ENCODE measurements at regions of chr2 and their contacts with region 1.

Region 1: GRCh38 chr2:17851731-17852585 is 26.5 kb upstream of the KCNS3 start:
- DNase-seq: peak; percentile 27 to 87 (median 68)

Region 2: DNA sequence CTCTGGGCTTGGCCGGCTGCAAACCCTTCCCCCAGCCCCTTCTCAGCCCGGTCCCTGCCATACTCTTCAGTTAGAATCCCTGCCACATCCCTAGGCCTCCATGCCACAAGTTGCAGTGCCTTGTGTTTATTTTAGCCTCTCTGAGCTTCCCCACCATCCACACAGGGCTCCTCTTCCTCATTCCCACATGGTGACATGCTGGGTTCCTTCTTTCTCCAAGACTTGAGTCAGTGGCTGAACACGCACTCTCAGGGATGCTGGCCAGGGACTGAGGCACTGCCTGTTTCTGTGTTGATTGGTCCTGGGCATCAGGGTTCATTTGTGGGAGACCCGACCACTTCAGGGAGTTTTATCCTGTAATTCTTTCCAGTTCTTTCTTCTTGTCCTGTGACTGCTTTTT is 82.8 kb after region 1 on chr2:
- intact Hi-C with region 1: no loop called
- DNase-seq: no peak

Region 3: GRCh38 chr2:17966798-17967197 is 114.8 kb after region 1 on chr2:
- intact Hi-C with region 1: no loop called
- DNase-seq: no peak

Region 4: DNA sequence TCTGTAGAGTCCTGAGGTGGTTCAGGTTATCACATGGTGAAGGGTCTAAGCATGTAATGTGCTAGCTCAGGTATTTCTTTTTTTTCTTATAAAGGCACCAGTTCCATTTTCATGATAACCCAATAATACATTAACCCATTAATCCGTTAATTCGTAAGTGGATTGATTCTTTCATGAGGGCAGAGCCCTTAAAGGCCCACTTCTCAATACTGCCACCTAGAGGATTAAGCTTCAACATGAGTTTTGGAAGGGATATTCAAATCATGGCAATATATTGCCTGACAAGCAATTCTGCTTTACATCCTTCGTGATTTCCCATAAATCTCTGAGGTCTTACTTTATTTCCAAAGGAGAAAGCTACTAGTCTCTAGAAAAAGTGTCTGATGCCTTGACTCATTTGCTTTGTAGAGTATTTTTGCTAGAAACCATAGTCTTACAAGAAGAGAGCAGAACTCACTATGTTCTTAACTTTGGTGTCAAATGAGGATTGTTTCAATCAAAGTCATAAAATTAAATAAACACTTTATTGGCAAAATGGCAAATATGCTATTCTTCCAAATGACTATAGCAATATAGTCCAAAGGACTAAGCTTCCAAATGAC is 297.8 kb after region 1 on chr2:
- intact Hi-C with region 1: loop called (anchors 5 kb)
- DNase-seq: peak in 2 of 42 donors; percentile 4 to 43

Region 5: DNA sequence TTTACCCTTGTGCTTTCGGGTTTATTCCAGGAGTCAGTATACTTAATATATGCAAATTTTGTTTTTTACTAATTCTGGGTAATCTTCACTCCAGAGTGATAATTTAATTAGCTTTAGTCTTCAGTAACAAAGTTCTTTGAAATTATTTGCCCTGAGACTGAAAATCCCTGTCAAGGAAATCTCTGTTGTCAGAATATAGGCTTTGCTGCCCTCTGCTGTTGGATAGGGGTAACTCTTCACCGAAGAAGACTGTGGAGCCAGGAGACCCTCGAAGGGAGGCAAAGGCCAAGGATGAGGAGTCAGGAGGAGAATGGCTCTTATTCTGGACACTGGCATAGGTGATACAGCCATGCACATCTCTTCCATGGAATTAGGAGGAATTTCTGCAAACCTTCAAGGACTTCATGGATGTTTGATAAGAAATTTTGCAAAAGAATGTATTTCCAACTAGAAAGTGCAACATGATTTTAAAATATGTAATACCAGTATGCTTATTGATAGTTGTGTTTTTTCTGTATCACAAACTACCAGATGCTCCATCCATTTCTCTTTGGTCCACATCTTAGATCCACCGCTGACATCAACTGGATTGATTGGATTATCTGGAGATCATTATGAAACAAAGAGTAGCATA is 526.2 kb after region 1 on chr2:
- intact Hi-C with region 1: loop called (anchors 5 kb)
- DNase-seq: peak in 29 of 42 donors; percentile 6 to 78 (median 48)

Measured in head of caudate nucleus (tissue), 42 donors.